Activated CD8-positive, alpha-beta T cell treated with anti-CD3 and anti-CD28 coated beads, Interleukin-2, amount 10 ng/mL, durations not matched to agents 7 days and 5 days (primary cell): ENCODE measurements at regions of chr2 and their contacts with region 1.

Region 1: GRCh38 chr2:74587664-74588277 is 33.3 kb downstream of the DOK1 start:
- DNase-seq: peak; percentile 77
- ATAC-seq: peak; percentile 81
- H3K4me3 Mint-ChIP-seq: no peak overlapping the region
- H3K27ac Mint-ChIP-seq: no peak overlapping the region
- H3K4me1 Mint-ChIP-seq: peaks cover 25% of the 10 kb centered on the region
- H3K27me3 Mint-ChIP-seq: peaks cover 15% of the 10 kb centered on the region

Region 2: GRCh38 chr2:74250189-74250631 is 337.6 kb before region 1 on chr2:
- CTCF ChIA-PET with region 1: interaction called, 10 read pairs
- POLR2A ChIA-PET with region 1: no interaction called
- DNase-seq: peak; percentile 68
- ATAC-seq: peak; percentile 77
- H3K4me3 Mint-ChIP-seq: no peak overlapping the region
- H3K27ac Mint-ChIP-seq: no peak overlapping the region
- H3K4me1 Mint-ChIP-seq: peaks cover 2% of the 10 kb centered on the region
- H3K27me3 Mint-ChIP-seq: no peaks in the 10 kb centered on the region

Region 3: GRCh38 chr2:74357627-74358026 is 230.1 kb before region 1 on chr2:
- CTCF ChIA-PET with region 1: no interaction called
- POLR2A ChIA-PET with region 1: no interaction called
- DNase-seq: no peak
- ATAC-seq: no peak
- H3K4me3 Mint-ChIP-seq: no peak overlapping the region
- H3K27ac Mint-ChIP-seq: no peak overlapping the region
- H3K4me1 Mint-ChIP-seq: no peaks in the 10 kb centered on the region
- H3K27me3 Mint-ChIP-seq: no peaks in the 10 kb centered on the region

Region 4: GRCh38 chr2:74472086-74472944 is 115.5 kb before region 1 on chr2 and contains the start of gene MRPL53:
- CTCF ChIA-PET with region 1: interaction called, 10 read pairs
- POLR2A ChIA-PET with region 1: interaction called, 4 read pairs
- DNase-seq: peak; percentile 97
- ATAC-seq: peak; percentile 95
- H3K4me3 Mint-ChIP-seq: peak within 1 kb of the TSS; percentile 98
- H3K27ac Mint-ChIP-seq: peak within 1 kb of the TSS; percentile 99
- H3K4me1 Mint-ChIP-seq: peaks cover 33% of the 10 kb centered on the region
- H3K27me3 Mint-ChIP-seq: no peaks in the 10 kb centered on the region
- total RNA-seq, gene MRPL53: 95.7 to 96.2 TPM

Region 5: DNA sequence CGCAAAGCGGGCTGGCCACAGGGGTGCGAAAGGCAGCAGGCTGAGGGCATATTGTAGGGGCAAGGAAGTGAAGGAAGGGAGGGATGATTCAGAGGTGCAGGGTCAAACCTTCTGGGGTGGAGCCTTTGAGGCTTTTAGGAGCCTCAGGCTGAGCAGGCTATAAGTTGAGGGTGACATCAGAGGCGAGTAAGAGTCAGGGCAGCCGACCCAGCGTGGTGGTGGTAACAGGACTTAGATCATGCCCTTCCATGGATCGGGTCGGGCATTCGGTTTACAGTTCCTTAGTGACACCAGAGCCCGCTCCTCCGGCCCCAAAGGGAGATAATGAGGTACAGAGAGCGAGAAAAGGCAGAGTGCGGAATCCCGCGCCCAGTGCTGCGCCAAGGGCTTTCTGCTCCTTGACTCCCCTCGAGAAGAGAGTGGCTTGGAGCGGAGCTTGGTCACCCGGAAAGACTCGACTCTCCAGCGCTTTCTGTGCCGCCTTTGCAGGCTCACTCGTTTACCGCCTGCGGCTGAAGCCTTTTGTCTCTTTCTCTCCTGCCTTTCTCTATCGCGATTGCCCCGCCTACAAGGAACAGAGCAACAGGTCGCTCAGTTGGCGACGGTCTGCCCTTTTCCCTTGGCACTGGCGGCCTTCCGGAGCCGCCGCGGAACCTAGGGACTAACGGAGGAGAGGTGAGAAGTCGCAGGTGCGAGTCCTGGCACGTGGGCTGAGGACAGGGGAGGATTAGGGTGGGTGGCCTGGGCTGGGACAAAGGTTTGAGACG is 89.1 kb before region 1 on chr2:
- CTCF ChIA-PET with region 1: interaction called, 25 read pairs
- POLR2A ChIA-PET with region 1: no interaction called
- DNase-seq: peak; percentile 49
- ATAC-seq: peak; percentile 37
- H3K4me3 Mint-ChIP-seq: peak overlapping the region; percentile 80
- H3K27ac Mint-ChIP-seq: peak overlapping the region; percentile 83
- H3K4me1 Mint-ChIP-seq: peaks cover 45% of the 10 kb centered on the region
- H3K27me3 Mint-ChIP-seq: peaks cover 41% of the 10 kb centered on the region

Region 6: GRCh38 chr2:74529357-74530238 is 58.2 kb before region 1 on chr2 and contains the starts of genes AUP1 and HTRA2:
- CTCF ChIA-PET with region 1: interaction called, 74 read pairs
- POLR2A ChIA-PET with region 1: interaction called, 7 read pairs
- DNase-seq: peak; percentile 97
- ATAC-seq: peak; percentile 92
- H3K4me3 Mint-ChIP-seq: peak within 1 kb of the TSS; percentile 95
- H3K27ac Mint-ChIP-seq: peak within 1 kb of the TSS; percentile 93
- H3K4me1 Mint-ChIP-seq: peaks cover 50% of the 10 kb centered on the region
- H3K27me3 Mint-ChIP-seq: no peaks in the 10 kb centered on the region
- total RNA-seq, gene AUP1: 119 to 123 TPM
- total RNA-seq, gene HTRA2: 48.0 to 49.4 TPM

Region 7: GRCh38 chr2:74544634-74545033 is 43.1 kb before region 1 on chr2:
- CTCF ChIA-PET with region 1: interaction called, 17 read pairs
- POLR2A ChIA-PET with region 1: no interaction called
- DNase-seq: peak; percentile 38
- ATAC-seq: no peak
- H3K4me3 Mint-ChIP-seq: no peak overlapping the region
- H3K27ac Mint-ChIP-seq: no peak overlapping the region
- H3K4me1 Mint-ChIP-seq: peaks cover 15% of the 10 kb centered on the region
- H3K27me3 Mint-ChIP-seq: peaks cover 48% of the 10 kb centered on the region

Region 8: GRCh38 chr2:74573747-74574562 is 13.8 kb before region 1 on chr2:
- CTCF ChIA-PET with region 1: interaction called, 231 read pairs
- POLR2A ChIA-PET with region 1: interaction called, 3 read pairs
- DNase-seq: peak; percentile 48
- ATAC-seq: peak; percentile 89
- H3K4me3 Mint-ChIP-seq: peak overlapping the region; percentile 50
- H3K27ac Mint-ChIP-seq: peak overlapping the region; percentile 80
- H3K4me1 Mint-ChIP-seq: peaks cover 32% of the 10 kb centered on the region
- H3K27me3 Mint-ChIP-seq: no peaks in the 10 kb centered on the region